ENCODE measurements at regions of chr2 and their contacts with region 1.

Region 1: DNA sequence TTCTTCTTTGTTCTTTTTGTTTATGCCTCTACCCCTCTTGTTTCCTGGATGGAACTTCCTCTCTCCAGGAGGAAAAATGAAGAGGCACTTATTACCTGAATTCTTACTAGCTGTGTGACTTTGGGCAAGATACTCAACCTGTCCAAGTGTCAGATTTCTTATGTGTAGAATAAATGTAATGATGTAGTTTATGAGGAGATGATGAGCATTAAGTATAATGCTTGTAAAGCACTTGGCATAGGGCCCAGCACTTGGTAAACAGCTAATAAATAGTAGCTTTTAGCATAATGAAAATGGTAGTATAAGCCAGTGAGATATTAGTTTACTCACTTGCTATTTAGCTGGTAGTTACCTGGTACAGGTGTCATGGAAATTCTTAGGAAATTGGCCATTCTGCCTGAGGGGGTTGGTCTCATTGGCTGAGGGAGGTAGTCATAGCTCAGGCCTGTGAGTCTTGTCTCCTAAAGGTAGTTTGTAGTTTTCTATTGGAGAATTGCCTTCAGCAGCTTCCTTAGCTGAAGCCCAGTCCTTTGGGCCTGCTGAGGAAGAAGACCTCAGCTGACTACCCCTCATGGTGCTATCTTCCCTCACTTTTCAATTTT is 133.4 kb upstream of the NABP1 start:
- DNase-seq: no peak
- ATAC-seq: no peak
- H3K4me3 ChIP-seq: no peak overlapping the region
- H3K27ac ChIP-seq: no peak overlapping the region
- H3K4me1 ChIP-seq: no peaks in the 10 kb centered on the region
- CTCF ChIP-seq: no peak
- EP300 ChIP-seq: no peak
- POLR2A ChIP-seq: no peak
- RAD21 ChIP-seq: no peak

Region 2: DNA sequence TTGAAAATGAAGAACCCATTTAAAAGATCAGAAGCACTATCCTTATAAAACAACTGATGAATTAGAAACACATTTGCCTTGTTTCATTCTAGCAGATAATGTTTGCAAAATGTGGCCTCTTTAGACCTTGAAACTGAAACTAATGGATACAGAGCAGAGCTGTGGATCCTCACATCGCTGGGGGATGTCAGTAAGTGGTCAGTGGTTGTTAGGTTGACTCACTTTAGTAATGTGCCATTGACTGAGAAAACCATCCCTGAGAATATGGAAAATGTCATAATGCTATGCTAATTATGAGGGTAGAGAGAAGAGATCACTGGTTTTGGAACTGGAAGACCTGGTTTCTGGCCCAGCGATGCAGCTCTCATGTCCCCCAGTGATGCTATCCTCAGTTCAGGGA is 122.6 kb before region 1 on chr2:
- CTCF ChIA-PET with region 1: no interaction called
- POLR2A ChIA-PET with region 1: no interaction called
- DNase-seq: no peak
- ATAC-seq: no peak
- H3K4me3 ChIP-seq: no peak overlapping the region
- H3K27ac ChIP-seq: no peak overlapping the region
- H3K4me1 ChIP-seq: peaks cover 9% of the 10 kb centered on the region; the same call in 2 of the 3 replicates
- CTCF ChIP-seq: no peak
- EP300 ChIP-seq: no peak
- POLR2A ChIP-seq: no peak
- RAD21 ChIP-seq: no peak

Region 3: GRCh38 chr2:191474464-191474863 is 70.1 kb before region 1 on chr2:
- CTCF ChIA-PET with region 1: no interaction called
- POLR2A ChIA-PET with region 1: no interaction called
- DNase-seq: no peak
- ATAC-seq: no peak
- H3K4me3 ChIP-seq: no peak overlapping the region
- H3K27ac ChIP-seq: no peak overlapping the region
- H3K4me1 ChIP-seq: no peaks in the 10 kb centered on the region
- CTCF ChIP-seq: no peak
- EP300 ChIP-seq: no peak
- POLR2A ChIP-seq: no peak
- RAD21 ChIP-seq: no peak

Region 4: DNA sequence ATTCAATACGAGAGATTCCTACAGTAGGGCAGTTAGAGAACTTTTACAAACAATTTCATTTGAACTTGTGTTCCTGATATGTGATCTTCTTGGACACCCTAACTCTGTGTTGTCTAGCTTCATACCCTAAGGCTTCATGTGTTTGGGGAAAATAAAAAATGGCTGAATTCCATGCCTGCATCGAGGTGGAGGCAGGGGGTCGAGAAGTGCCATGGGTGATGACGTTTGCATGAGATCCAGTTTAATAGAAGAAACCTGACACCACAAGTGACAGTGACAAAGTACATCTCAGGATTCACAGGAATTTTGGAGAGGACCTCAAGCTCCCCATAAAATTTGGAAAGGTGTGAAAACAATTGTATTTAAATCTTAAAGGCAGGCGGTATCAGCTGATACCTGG is 35.8 kb before region 1 on chr2:
- CTCF ChIA-PET with region 1: no interaction called
- POLR2A ChIA-PET with region 1: no interaction called
- DNase-seq: peak in 1 of 2 experiments; percentile 61
- ATAC-seq: no peak
- H3K4me3 ChIP-seq: no peak overlapping the region
- H3K27ac ChIP-seq: peak overlapping the region; percentile 77 to 83
- H3K4me1 ChIP-seq: peaks cover 51% of the 10 kb centered on the region
- CTCF ChIP-seq: no peak
- EP300 ChIP-seq: no peak
- POLR2A ChIP-seq: no peak
- RAD21 ChIP-seq: no peak

Region 5: GRCh38 chr2:191555092-191555742 is 10.7 kb after region 1 on chr2:
- CTCF ChIA-PET with region 1: interaction called, 13 read pairs
- POLR2A ChIA-PET with region 1: no interaction called
- DNase-seq: peak; percentile 60 to 76
- ATAC-seq: peak; percentile 95 to 97
- H3K4me3 ChIP-seq: no peak overlapping the region
- H3K27ac ChIP-seq: peak overlapping the region; percentile 7 to 36; a peak in 2 of 6 replicates
- H3K4me1 ChIP-seq: peaks cover 11% of the 10 kb centered on the region; the same call in 1 of the 3 replicates
- CTCF ChIP-seq: peak; percentile 89
- EP300 ChIP-seq: no peak
- POLR2A ChIP-seq: no peak
- RAD21 ChIP-seq: peak; percentile 91 to 95